Activated CD4-positive, alpha-beta memory T cell treated with anti-CD3 and anti-CD28 coated beads for 36 hours (primary cell): ENCODE measurements at regions of chr11 and their contacts with region 1.

Region 1: GRCh38 chr11:124793466-124794278 is 6.5 kb downstream of the MSANTD2 start:
- DNase-seq: peak; percentile 17
- H3K4me3 Mint-ChIP-seq: no peak overlapping the region
- H3K27ac Mint-ChIP-seq: no peak overlapping the region
- H3K4me1 Mint-ChIP-seq: peaks cover 31% of the 10 kb centered on the region
- H3K27me3 Mint-ChIP-seq: no peaks in the 10 kb centered on the region

Region 2: GRCh38 chr11:124644426-124645280 is 149.0 kb before region 1 on chr11:
- CTCF ChIA-PET with region 1: interaction called, 12 read pairs
- POLR2A ChIA-PET with region 1: no interaction called
- intact Hi-C with region 1: no loop called
- DNase-seq: peak; percentile 38
- H3K4me3 Mint-ChIP-seq: no peak overlapping the region
- H3K27ac Mint-ChIP-seq: no peak overlapping the region
- H3K4me1 Mint-ChIP-seq: peaks cover 2% of the 10 kb centered on the region
- H3K27me3 Mint-ChIP-seq: no peaks in the 10 kb centered on the region

Region 3: GRCh38 chr11:124778281-124778680 is 15.4 kb before region 1 on chr11:
- CTCF ChIA-PET with region 1: interaction called, 14 read pairs
- POLR2A ChIA-PET with region 1: no interaction called
- intact Hi-C with region 1: no loop called
- DNase-seq: no peak
- H3K4me3 Mint-ChIP-seq: no peak overlapping the region
- H3K27ac Mint-ChIP-seq: no peak overlapping the region
- H3K4me1 Mint-ChIP-seq: peaks cover 10% of the 10 kb centered on the region
- H3K27me3 Mint-ChIP-seq: no peaks in the 10 kb centered on the region

Region 4: GRCh38 chr11:124807660-124808270 is 14.1 kb after region 1 on chr11:
- CTCF ChIA-PET with region 1: interaction called, 22 read pairs
- POLR2A ChIA-PET with region 1: no interaction called
- intact Hi-C with region 1: no loop called
- DNase-seq: no peak
- H3K4me3 Mint-ChIP-seq: no peak overlapping the region
- H3K27ac Mint-ChIP-seq: no peak overlapping the region
- H3K4me1 Mint-ChIP-seq: no peaks in the 10 kb centered on the region
- H3K27me3 Mint-ChIP-seq: peaks cover 9% of the 10 kb centered on the region